ENCODE measurements at regions of chr16 and their contacts with region 1.

Region 1: DNA sequence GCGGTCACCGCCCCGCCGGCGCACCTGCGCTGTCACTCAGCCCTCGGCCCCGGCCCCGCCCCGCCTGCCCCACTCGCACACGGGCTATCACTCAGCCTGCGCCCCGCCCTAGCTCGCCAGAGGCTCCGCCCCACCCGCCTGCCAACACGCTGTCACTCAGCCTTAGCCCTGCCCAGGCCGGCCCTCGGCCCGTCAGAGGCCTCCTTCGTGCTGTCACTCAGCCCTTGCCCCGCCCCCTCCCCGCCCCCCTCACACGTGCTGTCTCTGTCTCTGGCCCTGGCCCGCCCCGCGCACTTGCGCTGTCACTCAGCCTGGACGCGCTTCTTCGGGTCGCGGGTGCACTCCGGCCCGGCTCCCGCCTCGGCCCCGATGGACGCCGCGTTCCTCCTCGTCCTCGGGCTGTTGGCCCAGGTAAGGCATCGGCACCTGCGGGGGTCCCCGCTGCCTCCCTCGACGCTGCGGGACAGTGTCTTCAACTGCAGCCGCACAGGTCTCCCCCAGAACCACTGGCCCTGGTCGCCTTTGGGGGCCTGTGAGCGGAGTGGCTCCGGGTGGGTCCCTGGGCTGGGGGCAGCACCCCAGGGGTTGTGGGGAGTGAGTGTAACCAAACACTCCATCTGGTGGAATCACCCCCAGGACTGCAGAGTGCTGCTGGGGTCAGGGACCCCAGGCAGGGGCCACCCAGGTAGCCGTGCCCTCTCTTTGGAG is at the start of gene CDH15:
- DNase-seq: peak; percentile 98
- ATAC-seq: peak; percentile 96
- H3K4me3 Mint-ChIP-seq: peak within 1 kb of the TSS; percentile 48
- H3K27ac Mint-ChIP-seq: no peak within 1 kb of the TSS
- H3K4me1 Mint-ChIP-seq: peaks cover 9% of the 10 kb centered on the region
- H3K27me3 Mint-ChIP-seq: peaks cover 2% of the 10 kb centered on the region
- CTCF ChIP-seq: no peak
- total RNA-seq, gene CDH15: not detected

Region 2: GRCh38 chr16:88821168-88821850 is 350.3 kb before region 1 on chr16:
- CTCF ChIA-PET with region 1: no interaction called
- POLR2A ChIA-PET with region 1: no interaction called
- intact Hi-C with region 1: loop called (anchors 10 kb)
- DNase-seq: no peak
- ATAC-seq: no peak
- H3K4me3 Mint-ChIP-seq: no peak overlapping the region
- H3K27ac Mint-ChIP-seq: no peak overlapping the region
- H3K4me1 Mint-ChIP-seq: no peaks in the 10 kb centered on the region
- H3K27me3 Mint-ChIP-seq: no peaks in the 10 kb centered on the region
- CTCF ChIP-seq: no peak

Region 3: DNA sequence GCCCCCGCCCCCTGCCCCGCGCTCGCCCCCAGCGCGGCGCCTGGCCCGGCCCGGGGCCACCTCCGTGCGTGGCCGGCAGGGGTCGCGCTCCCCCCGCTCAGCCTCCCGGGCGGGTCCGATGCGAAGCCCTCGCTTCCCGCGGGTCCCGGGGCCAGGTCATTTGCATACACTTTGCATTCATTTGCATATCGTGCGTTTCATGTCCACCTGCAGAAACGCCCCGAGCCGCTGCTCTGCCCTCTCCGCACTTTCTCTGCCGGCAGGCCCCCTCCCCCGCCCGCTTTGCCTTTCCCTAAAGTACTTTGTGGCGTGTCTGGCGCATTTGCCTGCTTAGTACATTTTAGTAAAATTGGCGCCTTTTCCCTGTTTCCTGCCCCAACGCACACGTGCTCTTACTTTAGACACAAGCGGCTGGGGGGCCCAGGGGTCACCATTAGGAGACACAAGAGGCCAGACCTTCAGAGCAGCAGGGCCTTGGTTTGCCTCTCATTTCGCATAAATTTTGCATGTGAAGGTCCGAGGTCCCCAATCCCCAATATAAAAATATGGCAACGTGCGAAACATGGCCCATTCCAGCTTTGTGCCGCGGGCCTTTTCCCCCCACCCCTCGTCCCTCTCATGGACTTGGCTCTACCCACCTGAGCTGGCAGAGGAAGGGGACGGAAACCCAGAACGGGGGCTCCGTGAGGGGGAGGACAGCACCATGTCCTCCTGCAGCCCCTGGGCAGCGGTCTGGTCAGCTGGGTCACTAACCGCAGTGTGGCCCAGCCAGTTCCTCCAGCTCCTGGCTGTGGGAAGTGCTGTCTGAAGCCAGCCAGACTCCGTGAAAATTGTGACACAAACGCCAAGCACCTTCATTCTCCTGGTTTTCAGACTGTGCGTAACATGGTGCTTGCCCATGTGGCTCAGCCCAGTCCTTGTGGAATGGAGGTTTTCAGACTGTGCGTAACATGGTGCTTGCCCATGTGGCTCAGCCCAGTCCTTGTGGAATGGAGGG is 229.4 kb before region 1 on chr16:
- CTCF ChIA-PET with region 1: interaction called, 10 read pairs
- POLR2A ChIA-PET with region 1: no interaction called
- intact Hi-C with region 1: loop called (anchors 5 kb)
- DNase-seq: peak; percentile 72
- ATAC-seq: peak; percentile 70
- H3K4me3 Mint-ChIP-seq: peak overlapping the region; percentile 10
- H3K27ac Mint-ChIP-seq: no peak overlapping the region
- H3K4me1 Mint-ChIP-seq: peaks cover 9% of the 10 kb centered on the region
- H3K27me3 Mint-ChIP-seq: peaks cover 44% of the 10 kb centered on the region
- CTCF ChIP-seq: peak; percentile 93

Region 4: DNA sequence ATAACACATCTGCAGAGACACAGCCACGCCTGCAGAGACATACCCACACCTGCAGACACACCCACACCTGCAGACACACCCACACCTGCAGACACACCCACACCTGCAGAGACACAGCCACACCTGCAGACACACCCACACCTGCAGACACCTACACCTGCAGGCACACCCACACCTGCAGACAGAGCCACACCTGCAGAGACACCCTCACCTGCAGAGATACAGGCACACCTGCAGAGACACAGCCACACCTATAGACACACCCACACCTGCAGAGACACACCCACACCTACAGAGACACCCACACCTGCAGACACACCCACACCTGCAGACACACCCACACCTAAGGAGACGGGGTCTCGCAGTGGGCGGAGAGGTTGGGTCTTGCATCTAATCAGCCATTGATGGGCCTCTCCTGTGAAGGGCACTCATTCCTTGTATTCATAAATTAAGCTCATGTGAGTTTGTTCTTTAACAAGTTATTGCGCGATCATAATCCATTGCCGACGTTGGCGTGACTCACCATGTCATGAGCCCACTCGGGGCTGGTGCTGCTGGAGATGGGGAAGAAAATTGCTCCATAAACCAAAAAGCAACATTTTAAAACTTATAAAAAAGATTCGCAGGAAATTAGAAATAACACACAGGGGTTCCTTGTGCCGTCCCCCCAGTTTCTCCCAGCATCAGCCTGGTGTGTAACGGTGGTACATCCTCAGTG is 29.0 kb before region 1 on chr16:
- CTCF ChIA-PET with region 1: no interaction called
- POLR2A ChIA-PET with region 1: no interaction called
- intact Hi-C with region 1: no loop called
- DNase-seq: no peak
- ATAC-seq: no peak
- H3K4me3 Mint-ChIP-seq: no peak overlapping the region
- H3K27ac Mint-ChIP-seq: no peak overlapping the region
- H3K4me1 Mint-ChIP-seq: peaks cover 5% of the 10 kb centered on the region
- H3K27me3 Mint-ChIP-seq: no peaks in the 10 kb centered on the region
- CTCF ChIP-seq: no peak